K562 (cell line): ENCODE measurements at regions of chr1 and their contacts with region 1.

Region 1: GRCh38 chr1:226062558-226063223 is at the start of gene H3-3A:
- DNase-seq: peak; percentile 98 to 99 (median 98)
- ATAC-seq: peak; percentile 86
- H3K4me3 ChIP-seq: peak within 1 kb of the TSS; percentile 94
- H3K27ac ChIP-seq: peak within 1 kb of the TSS; percentile 97
- H3K4me1 ChIP-seq: peaks cover 7 to 24% of the 10 kb centered on the region in 2 experiments
- H3K27me3 ChIP-seq: no peaks in the 10 kb centered on the region
- CTCF ChIP-seq: peak in 1 of 3 experiments; percentile 23; a peak in 2 of 6 replicates
- EP300 ChIP-seq: no peak
- POLR2A ChIP-seq: peak; percentile 97
- RAD21 ChIP-seq: peak; percentile 13 to 41; a peak in 1 of 4 replicates
- polyA plus RNA-seq, gene H3-3A: 543 to 591 TPM

Region 2: DNA sequence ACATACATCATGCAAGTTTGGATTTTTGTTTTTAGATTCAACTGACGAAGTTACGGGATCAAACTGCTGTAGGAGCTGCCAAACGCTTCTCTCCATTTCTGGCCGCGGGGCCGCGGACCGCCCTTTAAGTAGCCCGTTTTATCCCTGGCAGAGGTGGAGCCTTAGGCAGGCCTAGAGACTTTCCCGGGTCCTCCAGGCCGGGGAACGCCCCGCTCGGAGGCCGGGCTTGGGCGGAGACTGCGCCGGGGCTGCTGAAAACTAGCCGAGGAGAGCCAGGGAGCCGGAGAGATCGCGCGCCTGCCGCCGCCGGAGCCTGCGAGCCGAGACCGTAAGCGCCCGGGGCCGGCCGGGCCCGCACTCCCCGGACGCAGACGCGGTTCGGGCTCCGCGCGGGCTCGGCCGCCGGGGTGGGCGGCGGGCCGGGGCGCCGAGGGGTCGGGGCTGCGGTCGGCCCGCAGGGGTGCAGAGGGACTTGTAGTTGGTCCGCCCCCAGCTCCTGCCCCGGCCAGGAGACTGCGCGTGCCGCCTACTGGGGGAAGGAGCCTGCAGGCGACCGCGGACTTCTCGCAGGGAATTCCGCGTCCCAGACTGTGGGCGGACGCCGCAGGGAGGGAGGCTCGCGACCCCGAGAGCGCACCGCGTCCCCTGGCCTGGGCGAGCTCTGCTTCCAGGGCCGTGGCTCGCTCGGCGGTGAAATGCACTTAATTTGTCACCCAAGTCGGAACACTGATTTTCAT is 252.7 kb before region 1 on chr1 and contains the start of gene EPHX1:
- CTCF ChIA-PET with region 1: no interaction called
- POLR2A ChIA-PET with region 1: no interaction called
- in situ Hi-C with region 1: no loop called
- intact Hi-C with region 1: loop called (anchors 5 kb)
- DNase-seq: peak; percentile 88 to 94 (median 92)
- ATAC-seq: peak; percentile 94
- H3K4me3 ChIP-seq: peak within 1 kb of the TSS; percentile 48
- H3K27ac ChIP-seq: 0 out of 3 replicates have a peak within 1 kb of the TSS, but pooled peaks have one; percentile 16
- H3K4me1 ChIP-seq: peaks cover 17 to 30% of the 10 kb centered on the region in 2 experiments
- H3K27me3 ChIP-seq: no peaks in the 10 kb centered on the region
- CTCF ChIP-seq: peak; percentile 20 to 60 (median 54); a peak in 4 of 6 replicates
- EP300 ChIP-seq: no peak
- POLR2A ChIP-seq: no peak; the same call in 1 of the 2 replicates
- RAD21 ChIP-seq: peak in 1 of 2 experiments; percentile 45; a peak in 2 of 4 replicates
- polyA plus RNA-seq, gene EPHX1: 0.21 to 0.48 TPM

Region 3: GRCh38 chr1:225987491-225988316 is 75.0 kb before region 1 on chr1:
- CTCF ChIA-PET with region 1: interaction called, 3 read pairs
- POLR2A ChIA-PET with region 1: interaction called, 13 read pairs
- in situ Hi-C with region 1: no loop called
- intact Hi-C with region 1: no loop called
- DNase-seq: peak in 2 of 4 experiments; percentile 42 to 71
- ATAC-seq: peak; percentile 79
- H3K4me3 ChIP-seq: no peak overlapping the region
- H3K27ac ChIP-seq: no peak overlapping the region; the same call in 2 of the 3 replicates
- H3K4me1 ChIP-seq: no peaks in the 10 kb centered on the region
- H3K27me3 ChIP-seq: no peaks in the 10 kb centered on the region
- CTCF ChIP-seq: peak; percentile 62 to 82 (median 68); a peak in 5 of 6 replicates
- EP300 ChIP-seq: no peak
- POLR2A ChIP-seq: no peak
- RAD21 ChIP-seq: peak; percentile 62 to 74

Region 4: GRCh38 chr1:226019572-226019971 is 43.1 kb before region 1 on chr1:
- CTCF ChIA-PET with region 1: no interaction called
- POLR2A ChIA-PET with region 1: no interaction called
- in situ Hi-C with region 1: no loop called
- intact Hi-C with region 1: no loop called
- DNase-seq: no peak
- ATAC-seq: no peak
- H3K4me3 ChIP-seq: no peak overlapping the region
- H3K27ac ChIP-seq: no peak overlapping the region
- H3K4me1 ChIP-seq: peaks cover 5 to 8% of the 10 kb centered on the region in 2 experiments; a peak in 3 of 5 replicates
- H3K27me3 ChIP-seq: no peaks in the 10 kb centered on the region
- CTCF ChIP-seq: no peak
- EP300 ChIP-seq: no peak
- POLR2A ChIP-seq: no peak
- RAD21 ChIP-seq: no peak

Region 5: GRCh38 chr1:226051356-226051755 is 11.3 kb before region 1 on chr1:
- CTCF ChIA-PET with region 1: no interaction called
- POLR2A ChIA-PET with region 1: interaction called, 23 read pairs
- in situ Hi-C with region 1: no loop called
- intact Hi-C with region 1: no loop called
- DNase-seq: no peak
- ATAC-seq: no peak
- H3K4me3 ChIP-seq: no peak overlapping the region
- H3K27ac ChIP-seq: no peak overlapping the region
- H3K4me1 ChIP-seq: peaks cover 0 to 3% of the 10 kb centered on the region in 2 experiments; a peak in 2 of 5 replicates
- H3K27me3 ChIP-seq: no peaks in the 10 kb centered on the region
- CTCF ChIP-seq: no peak
- EP300 ChIP-seq: no peak
- POLR2A ChIP-seq: no peak
- RAD21 ChIP-seq: no peak

Region 6: GRCh38 chr1:226092965-226093364 is 30.3 kb after region 1 on chr1:
- CTCF ChIA-PET with region 1: no interaction called
- POLR2A ChIA-PET with region 1: interaction called, 11 read pairs
- in situ Hi-C with region 1: no loop called
- intact Hi-C with region 1: no loop called
- DNase-seq: no peak
- ATAC-seq: no peak
- H3K4me3 ChIP-seq: no peak overlapping the region
- H3K27ac ChIP-seq: no peak overlapping the region
- H3K4me1 ChIP-seq: peaks cover 0 to 11% of the 10 kb centered on the region in 2 experiments; a peak in 3 of 5 replicates
- H3K27me3 ChIP-seq: no peaks in the 10 kb centered on the region
- CTCF ChIP-seq: no peak
- EP300 ChIP-seq: no peak
- POLR2A ChIP-seq: no peak
- RAD21 ChIP-seq: no peak

Region 7: DNA sequence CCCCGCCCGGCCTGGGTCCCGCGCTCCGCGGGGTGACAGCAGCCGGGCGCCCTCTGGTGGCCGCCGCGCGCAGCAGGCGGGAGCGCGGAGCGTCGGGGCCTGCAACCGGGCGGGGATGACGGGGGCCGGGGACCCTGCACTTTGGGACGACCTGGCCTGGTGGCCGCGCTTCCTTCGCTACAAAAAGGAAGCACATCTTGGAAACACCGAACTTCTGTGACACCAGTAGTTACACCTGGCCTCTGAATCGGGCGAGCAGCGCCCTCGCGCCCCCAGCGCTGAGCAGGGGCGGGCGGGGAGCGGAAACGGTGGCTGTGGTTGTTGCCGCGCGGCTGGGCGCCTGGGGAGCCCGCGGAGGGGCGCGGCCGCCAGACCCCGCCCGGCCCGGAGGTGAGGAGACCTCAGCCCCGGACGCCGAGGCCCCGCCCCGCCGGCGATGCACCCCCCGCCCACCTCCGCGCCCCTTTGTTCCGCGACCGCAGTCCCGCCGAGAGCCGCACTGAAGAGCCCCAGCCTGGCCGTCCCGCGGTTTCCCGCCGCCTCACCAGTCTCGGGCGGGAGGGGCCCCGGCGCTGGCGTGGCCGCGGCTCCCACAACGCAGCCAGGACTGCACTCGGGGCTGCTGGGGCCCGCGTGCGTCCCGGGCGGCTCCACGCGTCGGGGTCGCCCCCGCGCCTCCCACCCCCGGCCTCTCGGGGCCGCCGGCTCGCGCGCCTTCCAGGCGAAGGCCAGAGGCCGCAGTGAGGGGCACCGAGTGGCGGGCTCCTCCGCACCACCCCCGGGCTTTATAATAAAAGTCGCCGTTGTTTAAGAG is 59.1 kb after region 1 on chr1:
- CTCF ChIA-PET with region 1: interaction called, 56 read pairs
- POLR2A ChIA-PET with region 1: interaction called, 8 read pairs
- in situ Hi-C with region 1: no loop called
- intact Hi-C with region 1: loop called (anchors 1 kb)
- DNase-seq: peak; percentile 89 to 97 (median 96)
- ATAC-seq: peak; percentile 89
- H3K4me3 ChIP-seq: peak overlapping the region; percentile 56
- H3K27ac ChIP-seq: peak overlapping the region; percentile 83
- H3K4me1 ChIP-seq: peaks cover 10 to 39% of the 10 kb centered on the region in 2 experiments; a peak in 3 of 5 replicates
- H3K27me3 ChIP-seq: no peaks in the 10 kb centered on the region
- CTCF ChIP-seq: peak; percentile 84 to 93 (median 87)
- EP300 ChIP-seq: no peak; the same call in 1 of the 2 replicates
- POLR2A ChIP-seq: peak; percentile 63; the same call in 1 of the 2 replicates
- RAD21 ChIP-seq: peak; percentile 92 to 99